Heart left ventricle (tissue), 16 donors: ENCODE measurements at regions of chr2 and their contacts with region 1.

Region 1: GRCh38 chr2:147374423-147374811 is 470.4 kb upstream of the ACVR2A start:
- DNase-seq: no peak
- ATAC-seq: peak in 2 of 4 donors; percentile 13 to 16
- H3K4me3 ChIP-seq: no peak overlapping the region
- H3K27ac ChIP-seq: peak overlapping the region in 1 of 12 donors; percentile 2
- H3K4me1 ChIP-seq: peaks cover 0 to 6% (median 0%) of the 10 kb centered on the region in 12 donors
- H3K27me3 ChIP-seq: no peaks in the 10 kb centered on the region
- CTCF ChIP-seq: no peak
- POLR2A ChIP-seq: no peak

Region 2: DNA sequence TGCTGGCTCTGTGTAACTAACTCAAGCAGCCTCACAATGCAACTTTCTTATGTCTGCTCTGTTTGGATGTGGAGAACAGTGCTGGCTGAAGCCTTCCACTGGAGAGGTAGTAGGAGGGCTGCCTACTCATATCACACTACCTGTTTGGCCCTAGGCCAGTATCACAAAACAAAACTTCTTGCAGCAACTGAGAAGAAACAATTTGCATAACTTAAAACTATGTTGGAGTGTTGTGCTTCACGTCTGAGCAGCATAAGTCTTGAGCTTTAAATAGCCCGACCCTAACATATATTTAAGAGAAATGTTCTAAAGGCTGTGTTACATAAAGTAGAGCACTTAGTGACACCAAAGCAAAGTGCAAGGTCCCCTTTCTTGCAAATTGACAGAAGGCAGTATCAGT is 265.5 kb after region 1 on chr2:
- intact Hi-C with region 1: loop called in 1 of 10 experiments (anchors 5 kb)
- DNase-seq: no peak
- ATAC-seq: no peak
- H3K4me3 ChIP-seq: no peak overlapping the region
- H3K27ac ChIP-seq: no peak overlapping the region
- H3K4me1 ChIP-seq: peaks cover 0 to 17% (median 0%) of the 10 kb centered on the region in 12 donors
- H3K27me3 ChIP-seq: no peaks in the 10 kb centered on the region
- CTCF ChIP-seq: no peak
- POLR2A ChIP-seq: no peak

Region 3: GRCh38 chr2:147945660-147946059 is 571.2 kb after region 1 on chr2:
- intact Hi-C with region 1: no loop called
- DNase-seq: no peak
- ATAC-seq: no peak
- H3K4me3 ChIP-seq: no peak overlapping the region
- H3K27ac ChIP-seq: no peak overlapping the region
- H3K4me1 ChIP-seq: no peaks in the 10 kb centered on the region
- H3K27me3 ChIP-seq: no peaks in the 10 kb centered on the region
- CTCF ChIP-seq: no peak
- POLR2A ChIP-seq: no peak